ENCODE measurements at regions of chr6 and their contacts with region 1.

Region 1: GRCh38 chr6:110039364-110039980 is 61.4 kb downstream of the GPR6 start:
- DNase-seq: peak; percentile 75
- ATAC-seq: peak; percentile 87
- H3K4me3 Mint-ChIP-seq: peak overlapping the region; percentile 89
- H3K27ac Mint-ChIP-seq: peak overlapping the region; percentile 91
- H3K4me1 Mint-ChIP-seq: peaks cover 24% of the 10 kb centered on the region
- H3K27me3 Mint-ChIP-seq: no peaks in the 10 kb centered on the region
- CTCF ChIP-seq: no peak

Region 2: DNA sequence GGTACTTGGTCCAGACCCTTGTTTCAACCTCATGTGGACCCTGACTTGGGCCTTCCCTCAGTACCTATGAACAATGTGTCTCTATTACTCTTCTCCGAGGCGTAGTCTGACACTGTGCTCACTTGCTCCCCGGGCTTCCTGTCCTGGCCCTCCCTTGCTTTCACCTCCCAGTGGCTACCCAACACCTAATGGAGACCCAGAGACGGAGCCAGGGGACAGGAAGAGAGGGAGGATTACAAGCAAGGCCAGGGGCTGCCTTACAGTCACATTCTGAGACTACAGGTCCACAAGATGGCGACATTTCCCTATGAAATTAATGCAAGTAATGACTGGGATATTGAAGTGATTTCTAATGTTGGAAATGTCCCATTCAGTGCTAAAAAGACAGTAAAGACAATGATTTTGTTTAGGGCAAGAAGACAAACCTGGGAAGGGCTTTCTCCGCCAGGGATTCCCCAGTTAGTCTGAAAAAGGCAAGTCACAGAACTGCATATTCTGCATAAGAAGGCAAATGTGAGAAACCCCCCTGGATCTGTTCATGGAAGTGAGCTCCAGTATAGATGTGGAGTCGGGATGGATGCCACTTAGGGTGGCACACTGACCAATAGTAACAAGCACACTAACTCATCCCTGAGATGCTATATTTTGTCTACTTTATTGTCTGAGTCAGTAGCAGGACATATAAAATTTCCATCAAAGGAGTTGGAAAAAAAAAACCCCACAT is 512.4 kb before region 1 on chr6:
- CTCF ChIA-PET with region 1: interaction called, 20 read pairs
- POLR2A ChIA-PET with region 1: no interaction called
- intact Hi-C with region 1: loop called (anchors 1 kb)
- DNase-seq: peak; percentile 27
- ATAC-seq: peak; percentile 58
- H3K4me3 Mint-ChIP-seq: no peak overlapping the region
- H3K27ac Mint-ChIP-seq: no peak overlapping the region
- H3K4me1 Mint-ChIP-seq: peaks cover 2% of the 10 kb centered on the region
- H3K27me3 Mint-ChIP-seq: no peaks in the 10 kb centered on the region
- CTCF ChIP-seq: no peak

Region 3: GRCh38 chr6:109772961-109773431 is 266.5 kb before region 1 on chr6:
- CTCF ChIA-PET with region 1: no interaction called
- POLR2A ChIA-PET with region 1: no interaction called
- intact Hi-C with region 1: loop called (anchors 5 kb)
- DNase-seq: no peak
- ATAC-seq: no peak
- H3K4me3 Mint-ChIP-seq: no peak overlapping the region
- H3K27ac Mint-ChIP-seq: peak overlapping the region; percentile 85
- H3K4me1 Mint-ChIP-seq: peaks cover 55% of the 10 kb centered on the region
- H3K27me3 Mint-ChIP-seq: no peaks in the 10 kb centered on the region
- CTCF ChIP-seq: no peak

Region 4: GRCh38 chr6:110053395-110054240 is 14.1 kb after region 1 on chr6:
- CTCF ChIA-PET with region 1: interaction called, 20 read pairs
- POLR2A ChIA-PET with region 1: no interaction called
- intact Hi-C with region 1: loop called (anchors 1 kb)
- DNase-seq: no peak
- ATAC-seq: no peak
- H3K4me3 Mint-ChIP-seq: no peak overlapping the region
- H3K27ac Mint-ChIP-seq: no peak overlapping the region
- H3K4me1 Mint-ChIP-seq: no peaks in the 10 kb centered on the region
- H3K27me3 Mint-ChIP-seq: peaks cover 3% of the 10 kb centered on the region
- CTCF ChIP-seq: no peak

Region 5: DNA sequence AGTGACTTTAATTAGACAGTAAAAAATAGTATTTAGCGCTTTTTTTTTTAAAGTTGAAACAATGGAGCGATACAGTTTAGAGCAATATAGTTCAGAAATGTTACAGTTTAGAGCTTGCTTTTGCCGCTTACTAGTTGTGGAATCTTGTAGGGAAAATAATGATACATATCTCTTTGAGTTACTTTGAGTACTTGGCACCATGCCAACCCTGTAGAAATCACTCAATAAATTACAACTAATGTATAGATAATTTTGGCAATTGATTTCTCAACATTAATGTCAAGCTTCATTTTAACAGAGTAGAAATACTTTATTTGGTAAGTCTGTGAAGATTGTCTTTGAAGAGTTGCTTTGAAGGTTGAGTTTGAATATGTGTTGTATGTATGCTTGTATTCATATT is 168.2 kb after region 1 on chr6:
- CTCF ChIA-PET with region 1: interaction called, 13 read pairs
- POLR2A ChIA-PET with region 1: no interaction called
- intact Hi-C with region 1: no loop called
- DNase-seq: no peak
- ATAC-seq: no peak
- H3K4me3 Mint-ChIP-seq: no peak overlapping the region
- H3K27ac Mint-ChIP-seq: no peak overlapping the region
- H3K4me1 Mint-ChIP-seq: peaks cover 46% of the 10 kb centered on the region
- H3K27me3 Mint-ChIP-seq: no peaks in the 10 kb centered on the region
- CTCF ChIP-seq: no peak

Region 6: GRCh38 chr6:110389689-110390382 is 350.4 kb after region 1 on chr6:
- CTCF ChIA-PET with region 1: interaction called, 77 read pairs
- POLR2A ChIA-PET with region 1: no interaction called
- intact Hi-C with region 1: loop called (anchors 1 kb)
- DNase-seq: no peak
- ATAC-seq: no peak
- H3K4me3 Mint-ChIP-seq: no peak overlapping the region
- H3K27ac Mint-ChIP-seq: no peak overlapping the region
- H3K4me1 Mint-ChIP-seq: no peaks in the 10 kb centered on the region
- H3K27me3 Mint-ChIP-seq: no peaks in the 10 kb centered on the region
- CTCF ChIP-seq: no peak